ENCODE measurements at regions of chr17 and their contacts with region 1.

Region 1: GRCh38 chr17:45197555-45198334 is 23.9 kb upstream of the FMNL1 start:
- DNase-seq: peak; percentile 87
- ATAC-seq: peak; percentile 100
- H3K4me3 ChIP-seq: no peak overlapping the region
- H3K4me3 Mint-ChIP-seq: no peak overlapping the region
- H3K27ac ChIP-seq: no peak overlapping the region
- H3K27ac Mint-ChIP-seq: peak overlapping the region; percentile 15
- H3K4me1 ChIP-seq: peaks cover 0 to 6% of the 10 kb centered on the region in 2 donors
- H3K4me1 Mint-ChIP-seq: peaks cover 9% of the 10 kb centered on the region
- H3K27me3 ChIP-seq: no peaks in the 10 kb centered on the region
- H3K27me3 Mint-ChIP-seq: no peaks in the 10 kb centered on the region
- CTCF ChIP-seq: peak; percentile 97

Region 2: GRCh38 chr17:44981221-44981968 is 216.3 kb before region 1 on chr17:
- CTCF ChIA-PET with region 1: no interaction called
- POLR2A ChIA-PET with region 1: no interaction called
- intact Hi-C with region 1: no loop called
- DNase-seq: no peak
- ATAC-seq: no peak
- H3K4me3 ChIP-seq: no peak overlapping the region
- H3K4me3 Mint-ChIP-seq: no peak overlapping the region
- H3K27ac ChIP-seq: no peak overlapping the region
- H3K27ac Mint-ChIP-seq: no peak overlapping the region
- H3K4me1 ChIP-seq: no peaks in the 10 kb centered on the region
- H3K4me1 Mint-ChIP-seq: no peaks in the 10 kb centered on the region
- H3K27me3 ChIP-seq: peaks cover 0 to 46% (median 9%) of the 10 kb centered on the region in 4 experiments
- H3K27me3 Mint-ChIP-seq: peaks cover 24% of the 10 kb centered on the region
- CTCF ChIP-seq: no peak

Region 3: DNA sequence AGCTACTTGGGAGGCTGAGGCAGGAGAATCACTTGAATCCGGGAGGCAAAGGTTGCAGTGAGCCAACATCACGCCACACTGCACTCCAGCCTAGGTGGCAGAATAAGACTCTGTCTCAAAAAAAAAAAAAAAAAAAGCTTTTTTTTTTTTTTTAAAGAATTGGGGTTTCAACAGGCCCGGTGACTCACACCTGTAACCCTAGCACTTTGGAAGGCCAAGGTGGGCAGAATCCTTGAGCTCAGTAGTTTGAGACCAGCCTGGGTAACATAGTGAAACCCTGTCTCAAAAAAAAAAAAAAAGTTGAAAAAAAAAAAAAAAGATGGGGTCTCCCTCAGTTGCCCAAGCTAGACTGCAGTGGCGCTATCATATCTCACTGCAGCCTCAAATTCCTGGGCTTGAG is 42.7 kb before region 1 on chr17:
- CTCF ChIA-PET with region 1: interaction called, 167 read pairs
- POLR2A ChIA-PET with region 1: interaction called, 9 read pairs
- intact Hi-C with region 1: no loop called
- DNase-seq: no peak
- ATAC-seq: no peak
- H3K4me3 ChIP-seq: no peak overlapping the region
- H3K4me3 Mint-ChIP-seq: no peak overlapping the region
- H3K27ac ChIP-seq: peak overlapping the region in 1 of 2 donors; percentile 60
- H3K27ac Mint-ChIP-seq: no peak overlapping the region
- H3K4me1 ChIP-seq: peaks cover 39 to 40% of the 10 kb centered on the region in 2 donors
- H3K4me1 Mint-ChIP-seq: peaks cover 49% of the 10 kb centered on the region
- H3K27me3 ChIP-seq: no peaks in the 10 kb centered on the region
- H3K27me3 Mint-ChIP-seq: no peaks in the 10 kb centered on the region
- CTCF ChIP-seq: no peak

Region 4: GRCh38 chr17:45172454-45173286 is 25.1 kb before region 1 on chr17:
- CTCF ChIA-PET with region 1: interaction called, 23 read pairs
- POLR2A ChIA-PET with region 1: interaction called, 4 read pairs
- intact Hi-C with region 1: no loop called
- DNase-seq: peak; percentile 59
- ATAC-seq: peak; percentile 85
- H3K4me3 ChIP-seq: peak overlapping the region in 4 of 5 experiments; percentile 31 to 51 (median 49)
- H3K4me3 Mint-ChIP-seq: peak overlapping the region; percentile 86
- H3K27ac ChIP-seq: peak overlapping the region; percentile 40 to 63
- H3K27ac Mint-ChIP-seq: peak overlapping the region; percentile 97
- H3K4me1 ChIP-seq: peaks cover 11 to 16% of the 10 kb centered on the region in 2 donors
- H3K4me1 Mint-ChIP-seq: peaks cover 12% of the 10 kb centered on the region
- H3K27me3 ChIP-seq: no peaks in the 10 kb centered on the region
- H3K27me3 Mint-ChIP-seq: no peaks in the 10 kb centered on the region
- CTCF ChIP-seq: no peak

Measured in B cell (primary cell).